ENCODE measurements at regions of chr10 and their contacts with region 1.

Region 1: DNA sequence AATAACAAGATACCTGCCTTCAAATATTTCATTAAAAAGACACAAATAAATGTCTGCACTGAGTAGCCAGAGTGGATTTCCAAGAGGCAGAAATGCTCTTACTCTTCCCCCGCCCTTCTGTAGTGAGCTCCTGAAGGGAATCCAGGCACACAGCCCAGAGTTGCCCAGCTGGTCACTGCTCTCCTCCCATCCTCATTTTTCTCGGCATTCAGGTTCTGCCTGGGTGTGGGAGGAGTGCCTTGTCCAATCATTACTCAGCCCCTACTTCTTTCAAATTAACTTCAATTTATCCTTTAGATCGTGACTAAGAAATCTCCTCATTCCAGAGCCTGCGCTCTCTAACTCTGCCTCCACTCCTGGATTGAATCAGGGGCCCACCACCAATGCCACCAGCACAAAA is 12.2 kb downstream of the CCDC6 start:
- DNase-seq: no peak
- ATAC-seq: no peak
- H3K4me3 ChIP-seq: no peak overlapping the region
- H3K27ac ChIP-seq: no peak overlapping the region
- H3K4me1 ChIP-seq: peaks cover 3% of the 10 kb centered on the region; the same call in 1 of the 3 replicates
- CTCF ChIP-seq: no peak
- EP300 ChIP-seq: no peak
- POLR2A ChIP-seq: no peak
- RAD21 ChIP-seq: no peak

Region 2: DNA sequence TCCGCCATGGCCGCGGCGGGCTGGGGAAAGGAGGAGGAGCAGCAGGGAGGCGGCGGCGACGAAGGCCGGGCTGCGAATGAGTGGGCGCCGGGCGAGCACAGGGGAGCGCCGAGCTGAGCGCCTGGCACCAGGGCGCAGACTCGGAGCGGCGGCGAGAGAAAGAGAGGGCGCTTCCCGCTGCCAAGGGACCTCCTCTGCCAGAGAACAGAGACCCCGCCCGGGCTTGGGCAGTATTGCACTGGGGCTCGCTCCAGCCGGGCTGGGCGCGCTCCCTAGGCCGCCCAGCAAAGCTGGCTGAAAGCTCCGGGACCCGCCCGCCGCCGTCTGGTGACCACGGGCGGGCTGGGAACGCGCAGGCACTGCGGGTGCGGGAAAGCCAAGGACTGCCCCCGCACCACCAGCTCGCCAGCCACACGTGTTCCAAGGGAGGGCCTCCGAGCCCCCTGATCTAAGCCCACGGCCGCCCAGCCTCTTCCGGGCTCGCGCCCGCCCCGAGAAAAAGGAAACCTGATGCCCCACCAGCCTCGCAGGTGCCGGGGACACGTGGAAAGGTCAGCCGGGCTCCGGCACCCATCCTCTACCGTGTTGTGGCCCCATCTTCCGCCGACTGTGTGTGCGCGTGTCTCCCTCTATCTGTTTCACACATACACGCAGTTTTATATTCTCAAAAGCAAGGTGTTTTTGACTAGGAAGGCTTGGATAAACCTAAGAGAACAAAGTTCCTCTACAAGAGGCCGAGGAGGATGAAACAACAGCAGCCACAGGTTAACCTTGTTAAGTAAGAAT is 12.5 kb after region 1 on chr10 and contains the start of gene CCDC6:
- CTCF ChIA-PET with region 1: interaction called, 12 read pairs
- POLR2A ChIA-PET with region 1: interaction called, 7 read pairs
- DNase-seq: peak; percentile 74 to 92
- ATAC-seq: peak; percentile 91 to 95
- H3K4me3 ChIP-seq: peak within 1 kb of the TSS; percentile 98
- H3K27ac ChIP-seq: peak within 1 kb of the TSS; percentile 84 to 94
- H3K4me1 ChIP-seq: peaks cover 28% of the 10 kb centered on the region
- CTCF ChIP-seq: peak; percentile 57
- EP300 ChIP-seq: no peak
- POLR2A ChIP-seq: peak; percentile 88
- RAD21 ChIP-seq: peak; percentile 28 to 44; a peak in 4 of 5 replicates
- polyA plus RNA-seq, gene CCDC6: 41.2 and 43.5 TPM in 2 replicates

Region 3: DNA sequence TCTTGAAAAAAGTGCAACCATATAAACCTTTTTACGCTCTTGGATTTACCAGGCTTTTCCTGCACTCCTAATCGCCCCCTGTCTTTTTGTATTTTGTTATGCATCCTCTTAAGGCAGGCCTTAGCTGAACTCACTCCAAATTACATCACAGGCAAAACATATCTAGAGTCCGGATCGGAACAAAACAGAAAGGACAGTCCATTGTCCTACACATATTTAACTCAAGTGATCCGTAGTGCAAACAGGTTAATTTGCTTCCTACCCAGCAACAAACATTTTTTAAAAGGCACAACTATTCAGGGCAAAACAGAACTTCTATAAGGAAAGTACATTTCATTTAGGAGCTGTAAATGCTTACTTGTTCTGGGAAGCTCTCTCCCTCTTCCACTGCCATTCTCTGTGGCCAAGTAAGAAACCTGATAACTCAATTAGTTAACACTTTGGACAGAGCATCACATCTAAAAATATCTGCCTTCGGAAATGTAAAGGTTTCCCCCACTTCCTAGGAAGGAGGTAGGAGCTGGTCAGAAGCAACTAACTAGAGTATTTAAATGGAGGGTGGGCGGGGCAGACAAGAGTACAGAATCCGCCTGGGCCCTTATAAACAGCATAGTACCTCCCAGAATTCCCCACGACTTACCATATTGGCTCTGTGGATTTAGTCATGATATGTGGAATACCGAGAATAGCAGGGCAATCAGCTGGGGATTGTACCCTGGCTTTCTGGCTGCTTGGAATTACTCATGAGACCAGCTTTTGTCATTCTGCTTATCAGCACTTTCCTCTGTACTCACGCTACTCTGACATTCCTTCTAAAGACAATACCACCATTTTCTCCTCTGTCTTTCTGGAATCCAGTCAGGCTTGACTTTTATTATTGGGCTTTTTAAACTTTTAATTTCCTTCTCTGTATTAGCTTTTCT is 406.1 kb after region 1 on chr10:
- CTCF ChIA-PET with region 1: no interaction called
- POLR2A ChIA-PET with region 1: no interaction called
- DNase-seq: no peak
- ATAC-seq: no peak
- H3K4me3 ChIP-seq: no peak overlapping the region
- H3K27ac ChIP-seq: no peak overlapping the region
- H3K4me1 ChIP-seq: no peaks in the 10 kb centered on the region
- CTCF ChIP-seq: no peak
- EP300 ChIP-seq: no peak
- POLR2A ChIP-seq: no peak
- RAD21 ChIP-seq: no peak

Measured in A549 (cell line).